Activated CD4-positive, alpha-beta T cell treated with anti-CD3 and anti-CD28 coated beads, Interleukin-2, amount 10 ng/mL, durations not matched to agents 24 days and 14 days (primary cell): ENCODE measurements at regions of chr12 and their contacts with region 1.

Region 1: GRCh38 chr12:27821259-27821973 is 41.4 kb upstream of the MANSC4 start:
- DNase-seq: peak; percentile 85
- H3K4me3 Mint-ChIP-seq: peak overlapping the region; percentile 6
- H3K27ac Mint-ChIP-seq: peak overlapping the region; percentile 87
- H3K4me1 Mint-ChIP-seq: peaks cover 36% of the 10 kb centered on the region
- H3K27me3 Mint-ChIP-seq: peaks cover 52% of the 10 kb centered on the region

Region 2: DNA sequence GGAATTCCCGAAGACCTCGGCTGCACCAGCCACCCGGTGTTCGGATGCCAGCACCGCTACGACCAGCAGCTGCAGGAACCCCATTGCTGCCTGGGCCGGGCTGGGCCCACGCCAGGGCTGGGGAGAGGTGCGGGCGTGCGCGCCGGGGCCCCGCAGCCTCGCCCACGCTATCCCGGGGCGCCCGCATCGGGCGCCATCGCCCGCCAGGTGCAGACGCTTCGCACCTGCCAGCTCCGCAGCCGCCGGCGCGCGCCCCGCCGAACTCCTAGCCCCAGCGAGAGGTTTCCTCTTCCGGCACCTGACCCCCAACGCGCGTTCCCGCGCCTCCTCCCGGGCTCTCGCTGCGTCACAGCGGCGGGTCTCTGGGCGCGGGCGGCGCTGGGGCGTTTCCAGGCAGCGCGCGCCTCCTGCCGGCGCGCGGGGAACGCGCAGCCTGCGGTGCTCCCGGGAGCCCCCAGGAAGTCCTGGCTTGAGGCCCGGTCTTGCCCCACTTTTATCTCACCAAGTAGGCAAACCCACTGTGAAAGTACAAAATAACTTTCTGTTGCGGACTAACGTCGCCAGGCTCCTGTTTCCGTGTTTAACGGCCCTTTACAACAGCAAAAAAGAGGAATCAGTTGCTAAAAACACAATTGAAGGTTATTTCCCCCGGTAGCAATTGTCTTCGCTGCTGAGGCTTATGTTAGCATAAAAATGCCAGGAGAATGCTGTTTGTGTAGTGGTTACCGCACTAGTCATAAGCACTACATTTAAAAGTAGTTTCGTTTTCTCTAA is 807.1 kb before region 1 on chr12 and contains the start of gene TM7SF3:
- intact Hi-C with region 1: loop called (anchors 2 kb)
- DNase-seq: peak; percentile 99
- H3K4me3 Mint-ChIP-seq: peak within 1 kb of the TSS; percentile 94
- H3K27ac Mint-ChIP-seq: peak within 1 kb of the TSS; percentile 95
- H3K4me1 Mint-ChIP-seq: peaks cover 47% of the 10 kb centered on the region
- H3K27me3 Mint-ChIP-seq: no peaks in the 10 kb centered on the region
- total RNA-seq, gene TM7SF3: 44.0 and 51.6 TPM in 2 replicates

Region 3: GRCh38 chr12:27498149-27498548 is 323.3 kb before region 1 on chr12:
- intact Hi-C with region 1: loop called (anchors 5 kb)
- DNase-seq: peak; percentile 70
- H3K4me3 Mint-ChIP-seq: peak overlapping the region; percentile 34
- H3K27ac Mint-ChIP-seq: peak overlapping the region; percentile 47
- H3K4me1 Mint-ChIP-seq: peaks cover 46% of the 10 kb centered on the region
- H3K27me3 Mint-ChIP-seq: peaks cover 25% of the 10 kb centered on the region

Region 4: DNA sequence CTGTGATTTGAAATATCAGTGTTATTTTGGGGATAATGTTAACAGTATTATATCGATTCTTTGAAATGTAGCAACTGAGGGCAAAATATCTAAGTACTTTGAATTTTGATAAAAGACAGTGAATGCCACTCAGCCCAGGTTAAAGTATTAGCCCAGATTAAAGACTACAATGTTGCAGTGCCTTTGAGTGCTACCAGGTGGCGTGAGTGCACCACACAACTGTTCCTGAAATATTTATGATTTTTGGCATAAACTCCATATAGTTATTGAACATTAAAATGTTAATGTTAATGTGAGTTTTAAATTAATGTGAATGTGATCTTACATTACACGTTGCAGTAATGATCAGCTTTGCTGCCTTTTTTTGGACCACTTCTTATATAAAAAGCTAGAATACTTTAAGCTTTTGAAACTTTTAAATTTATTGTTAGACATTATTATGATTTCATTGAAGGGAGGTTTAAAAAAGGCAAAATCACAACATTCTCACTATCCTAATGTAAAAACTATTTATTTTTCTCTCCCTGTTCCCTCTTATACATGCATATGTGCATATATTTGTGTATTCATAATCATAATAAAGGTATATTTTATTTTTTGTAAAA is 88.3 kb before region 1 on chr12:
- intact Hi-C with region 1: loop called (anchors 1 kb)
- DNase-seq: peak; percentile 78
- H3K4me3 Mint-ChIP-seq: no peak overlapping the region
- H3K27ac Mint-ChIP-seq: no peak overlapping the region
- H3K4me1 Mint-ChIP-seq: peaks cover 2% of the 10 kb centered on the region
- H3K27me3 Mint-ChIP-seq: no peaks in the 10 kb centered on the region

Region 5: DNA sequence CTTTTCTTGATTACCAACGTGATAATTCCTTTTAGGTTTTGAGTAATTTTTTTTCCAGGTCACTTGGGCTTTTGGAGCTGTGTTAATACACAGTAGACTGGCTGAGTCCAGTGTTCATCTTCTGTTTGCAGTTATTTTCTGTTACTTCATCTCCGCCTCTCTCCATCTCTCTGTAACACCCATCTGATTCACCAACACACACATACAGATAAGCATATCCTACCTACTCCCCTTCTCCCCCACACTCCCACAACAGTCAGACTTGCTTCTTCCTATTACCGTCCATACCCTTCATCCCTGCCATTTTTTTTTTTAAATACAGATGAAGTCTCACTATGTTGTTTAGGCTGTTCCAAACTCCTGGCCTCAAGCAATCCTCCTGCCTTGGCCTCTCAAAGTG is 31.3 kb after region 1 on chr12:
- intact Hi-C with region 1: no loop called
- DNase-seq: no peak
- H3K4me3 Mint-ChIP-seq: no peak overlapping the region
- H3K27ac Mint-ChIP-seq: no peak overlapping the region
- H3K4me1 Mint-ChIP-seq: no peaks in the 10 kb centered on the region
- H3K27me3 Mint-ChIP-seq: peaks cover 10% of the 10 kb centered on the region

Region 6: GRCh38 chr12:27864521-27864920 is 43.1 kb after region 1 on chr12:
- intact Hi-C with region 1: loop called (anchors 1 kb)
- DNase-seq: no peak
- H3K4me3 Mint-ChIP-seq: no peak overlapping the region
- H3K27ac Mint-ChIP-seq: no peak overlapping the region
- H3K4me1 Mint-ChIP-seq: peaks cover 2% of the 10 kb centered on the region
- H3K27me3 Mint-ChIP-seq: no peaks in the 10 kb centered on the region

Region 7: GRCh38 chr12:28253161-28253641 is 431.8 kb after region 1 on chr12:
- intact Hi-C with region 1: loop called (anchors 1 kb)
- DNase-seq: peak; percentile 76
- H3K4me3 Mint-ChIP-seq: peak overlapping the region; percentile 74
- H3K27ac Mint-ChIP-seq: peak overlapping the region; percentile 97
- H3K4me1 Mint-ChIP-seq: peaks cover 42% of the 10 kb centered on the region
- H3K27me3 Mint-ChIP-seq: no peaks in the 10 kb centered on the region

Region 8: DNA sequence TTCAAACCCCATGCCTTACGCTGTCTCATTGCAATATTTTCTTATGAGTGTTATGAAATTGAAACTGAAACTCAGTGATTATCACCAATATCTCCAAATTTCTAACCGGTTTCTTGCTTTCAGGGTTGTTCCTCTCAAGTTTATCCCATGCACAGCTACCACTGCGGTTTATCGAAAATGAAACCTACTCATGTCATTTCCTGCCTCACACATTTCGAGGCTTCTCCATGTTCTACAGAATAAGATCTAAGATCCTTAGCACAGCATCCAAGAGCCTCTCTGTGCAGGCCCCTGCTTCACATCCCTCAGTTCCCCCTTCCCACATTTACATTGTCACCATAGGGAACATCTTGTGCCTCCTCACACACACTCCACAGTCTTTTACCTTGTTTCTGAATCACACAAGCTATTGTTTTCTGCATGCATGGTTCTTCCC is 1282.1 kb after region 1 on chr12:
- intact Hi-C with region 1: loop called (anchors 5 kb)
- DNase-seq: peak; percentile 90
- H3K4me3 Mint-ChIP-seq: peak overlapping the region; percentile 59
- H3K27ac Mint-ChIP-seq: peak overlapping the region; percentile 84
- H3K4me1 Mint-ChIP-seq: peaks cover 31% of the 10 kb centered on the region
- H3K27me3 Mint-ChIP-seq: peaks cover 7% of the 10 kb centered on the region